Activated B cell treated with CpG ODN at 0.5 μM for 24 hours (primary cell): ENCODE measurements at regions of chr1 and their contacts with region 1.

Region 1: DNA sequence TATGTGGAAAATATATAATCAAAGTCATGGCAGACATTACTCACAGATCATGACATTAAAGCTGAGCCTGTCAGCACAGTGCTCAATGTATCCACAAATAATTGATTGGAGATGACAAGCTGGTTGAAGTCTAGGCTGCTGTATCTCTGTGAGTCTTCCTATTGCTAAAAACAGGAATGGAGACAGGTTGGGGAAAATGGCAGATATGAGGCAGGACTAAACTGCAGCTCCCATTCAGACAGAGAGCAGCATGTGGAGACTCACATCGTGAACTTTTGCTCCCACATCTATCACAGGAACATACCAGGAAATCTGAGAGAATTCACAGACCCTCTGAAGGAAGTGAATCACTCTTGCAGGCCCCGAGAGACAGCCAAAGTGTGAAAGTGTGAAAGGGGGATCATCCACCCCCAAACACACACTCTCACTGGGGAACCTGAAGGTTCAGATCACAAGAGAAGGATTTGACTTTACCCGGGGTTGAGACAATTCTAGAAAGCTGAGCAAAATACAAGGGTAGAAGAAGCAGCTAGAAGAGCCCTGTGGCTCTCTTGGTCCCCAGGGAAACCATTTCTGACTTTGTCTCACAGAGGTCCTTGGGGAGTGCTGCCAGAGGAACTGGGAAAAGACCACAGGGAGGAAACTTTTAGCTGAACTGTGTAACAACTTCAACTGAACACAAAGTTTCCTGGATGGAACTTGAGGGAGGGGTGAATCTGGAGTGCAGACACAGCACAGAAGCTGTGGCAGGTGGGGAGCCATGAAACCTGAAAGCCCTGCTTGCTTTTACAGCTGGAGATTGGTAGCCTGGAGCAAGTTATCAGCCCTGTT is 173.4 kb downstream of the S1PR1 start:
- DNase-seq: no peak
- ATAC-seq: peak; percentile 33
- H3K4me3 Mint-ChIP-seq: peak overlapping the region; percentile 64
- H3K27ac Mint-ChIP-seq: peak overlapping the region; percentile 74
- H3K4me1 Mint-ChIP-seq: peaks cover 75% of the 10 kb centered on the region
- H3K27me3 Mint-ChIP-seq: no peaks in the 10 kb centered on the region
- CTCF ChIP-seq: no peak

Region 2: GRCh38 chr1:100351095-100351891 is 1059.0 kb before region 1 on chr1:
- CTCF ChIA-PET with region 1: no interaction called
- POLR2A ChIA-PET with region 1: no interaction called
- intact Hi-C with region 1: loop called (anchors 5 kb)
- DNase-seq: peak; percentile 78
- ATAC-seq: peak; percentile 66
- H3K4me3 Mint-ChIP-seq: peak overlapping the region; percentile 99
- H3K27ac Mint-ChIP-seq: peak overlapping the region; percentile 96
- H3K4me1 Mint-ChIP-seq: peaks cover 35% of the 10 kb centered on the region
- H3K27me3 Mint-ChIP-seq: no peaks in the 10 kb centered on the region
- CTCF ChIP-seq: no peak

Region 3: GRCh38 chr1:101051688-101052638 is 358.3 kb before region 1 on chr1:
- CTCF ChIA-PET with region 1: no interaction called
- POLR2A ChIA-PET with region 1: no interaction called
- intact Hi-C with region 1: loop called (anchors 5 kb)
- DNase-seq: peak; percentile 27
- ATAC-seq: peak; percentile 88
- H3K4me3 Mint-ChIP-seq: peak overlapping the region; percentile 78
- H3K27ac Mint-ChIP-seq: peak overlapping the region; percentile 95
- H3K4me1 Mint-ChIP-seq: peaks cover 70% of the 10 kb centered on the region
- H3K27me3 Mint-ChIP-seq: no peaks in the 10 kb centered on the region
- CTCF ChIP-seq: no peak

Region 4: DNA sequence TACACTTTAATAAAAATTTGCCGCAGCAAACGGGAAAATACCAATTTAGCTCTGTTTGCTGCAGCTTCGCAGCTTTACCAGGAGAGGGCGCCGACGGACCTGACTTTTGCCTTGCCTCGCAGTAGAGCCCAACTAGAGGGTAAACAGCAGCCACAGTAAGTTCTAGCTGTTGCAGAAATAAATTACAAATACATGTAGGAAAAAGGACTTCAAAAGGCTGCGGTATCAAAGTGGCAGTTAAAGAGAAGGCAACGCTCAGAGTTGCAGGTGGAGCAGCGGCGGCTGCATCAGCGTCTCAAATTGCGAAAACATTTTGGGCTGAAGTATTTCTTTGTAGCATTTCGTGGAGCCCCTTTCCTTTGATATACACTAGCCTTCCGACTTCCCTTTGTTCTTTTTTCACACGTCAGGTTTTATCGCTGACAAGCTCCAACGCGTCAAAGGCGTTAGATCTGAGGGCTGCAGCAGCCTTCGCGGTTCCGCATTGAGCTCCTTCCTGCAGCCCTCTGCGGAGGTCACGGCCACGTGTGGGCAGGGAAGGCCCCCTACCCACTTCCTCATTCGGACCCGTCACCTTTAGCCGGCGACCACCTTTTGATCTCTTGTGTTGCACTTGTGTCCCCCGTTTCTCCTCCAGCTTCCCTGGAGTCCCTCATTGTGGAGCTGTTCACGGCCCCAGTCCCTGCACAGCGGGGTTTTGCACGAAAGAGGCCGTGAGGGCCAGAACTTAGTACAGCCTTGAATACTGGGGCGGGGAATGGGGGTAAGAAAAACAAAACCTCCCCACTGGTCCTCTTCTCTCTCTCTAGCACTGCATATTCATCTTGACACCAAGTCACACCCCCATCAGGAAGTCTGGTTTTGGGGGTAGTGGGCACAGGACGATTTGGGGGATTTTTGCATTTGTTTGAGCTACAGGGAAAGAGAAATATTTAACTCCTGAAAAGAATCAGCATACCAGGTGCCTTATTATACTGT is 100.6 kb before region 1 on chr1:
- CTCF ChIA-PET with region 1: interaction called, 21 read pairs
- POLR2A ChIA-PET with region 1: interaction called, 16 read pairs
- intact Hi-C with region 1: loop called (anchors 1 kb)
- DNase-seq: peak; percentile 57
- ATAC-seq: peak; percentile 75
- H3K4me3 Mint-ChIP-seq: peak overlapping the region; percentile 82
- H3K27ac Mint-ChIP-seq: peak overlapping the region; percentile 94
- H3K4me1 Mint-ChIP-seq: peaks cover 78% of the 10 kb centered on the region
- H3K27me3 Mint-ChIP-seq: no peaks in the 10 kb centered on the region
- CTCF ChIP-seq: peak; percentile 77

Region 5: DNA sequence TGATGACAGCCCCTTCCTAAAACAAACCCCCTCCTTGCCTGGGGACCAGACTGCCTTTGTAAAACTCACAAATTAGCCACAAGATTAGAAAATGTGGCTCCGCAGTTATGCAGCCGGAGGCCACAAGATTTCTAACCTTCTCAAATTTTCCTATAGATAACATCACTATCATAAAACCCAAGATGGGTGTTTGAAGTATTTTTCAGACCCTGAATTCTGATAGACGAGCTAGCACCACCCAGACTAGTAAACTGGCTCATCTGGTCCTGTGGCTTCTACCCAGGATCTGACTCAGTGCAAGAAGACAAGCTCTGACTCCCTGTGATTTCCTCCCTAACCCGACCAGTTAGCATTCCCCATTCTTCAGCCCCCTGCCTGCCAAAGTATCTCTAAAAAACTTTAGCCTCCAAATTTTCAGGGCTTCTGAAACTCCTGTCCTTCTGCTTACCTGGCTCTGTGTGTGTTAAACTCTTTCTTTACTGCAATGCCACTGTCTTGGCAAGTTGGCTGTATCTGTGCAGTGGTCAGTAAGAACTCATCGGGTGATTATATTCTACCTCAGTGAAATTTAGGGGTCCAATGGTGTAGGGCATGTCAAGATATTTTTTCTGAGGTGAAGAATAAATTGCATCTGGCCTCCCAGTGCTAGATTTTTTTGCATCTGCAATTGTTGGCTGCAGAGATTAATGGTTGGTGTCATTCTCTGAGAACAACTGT is 71.4 kb before region 1 on chr1:
- CTCF ChIA-PET with region 1: no interaction called
- POLR2A ChIA-PET with region 1: no interaction called
- intact Hi-C with region 1: no loop called
- DNase-seq: no peak
- ATAC-seq: no peak
- H3K4me3 Mint-ChIP-seq: no peak overlapping the region
- H3K27ac Mint-ChIP-seq: no peak overlapping the region
- H3K4me1 Mint-ChIP-seq: no peaks in the 10 kb centered on the region
- H3K27me3 Mint-ChIP-seq: no peaks in the 10 kb centered on the region
- CTCF ChIP-seq: no peak

Region 6: GRCh38 chr1:101388904-101389546 is 21.2 kb before region 1 on chr1:
- CTCF ChIA-PET with region 1: no interaction called
- POLR2A ChIA-PET with region 1: interaction called, 7 read pairs
- intact Hi-C with region 1: loop called (anchors 1 kb)
- DNase-seq: no peak
- ATAC-seq: peak; percentile 86
- H3K4me3 Mint-ChIP-seq: peak overlapping the region; percentile 32
- H3K27ac Mint-ChIP-seq: peak overlapping the region; percentile 87
- H3K4me1 Mint-ChIP-seq: peaks cover 51% of the 10 kb centered on the region
- H3K27me3 Mint-ChIP-seq: no peaks in the 10 kb centered on the region
- CTCF ChIP-seq: no peak

Region 7: GRCh38 chr1:101438359-101438758 is 28.1 kb after region 1 on chr1:
- CTCF ChIA-PET with region 1: interaction called, 17 read pairs
- POLR2A ChIA-PET with region 1: interaction called, 16 read pairs
- intact Hi-C with region 1: loop called (anchors 1 kb)
- DNase-seq: no peak
- ATAC-seq: peak; percentile 29
- H3K4me3 Mint-ChIP-seq: no peak overlapping the region
- H3K27ac Mint-ChIP-seq: no peak overlapping the region
- H3K4me1 Mint-ChIP-seq: peaks cover 42% of the 10 kb centered on the region
- H3K27me3 Mint-ChIP-seq: no peaks in the 10 kb centered on the region
- CTCF ChIP-seq: no peak

Region 8: DNA sequence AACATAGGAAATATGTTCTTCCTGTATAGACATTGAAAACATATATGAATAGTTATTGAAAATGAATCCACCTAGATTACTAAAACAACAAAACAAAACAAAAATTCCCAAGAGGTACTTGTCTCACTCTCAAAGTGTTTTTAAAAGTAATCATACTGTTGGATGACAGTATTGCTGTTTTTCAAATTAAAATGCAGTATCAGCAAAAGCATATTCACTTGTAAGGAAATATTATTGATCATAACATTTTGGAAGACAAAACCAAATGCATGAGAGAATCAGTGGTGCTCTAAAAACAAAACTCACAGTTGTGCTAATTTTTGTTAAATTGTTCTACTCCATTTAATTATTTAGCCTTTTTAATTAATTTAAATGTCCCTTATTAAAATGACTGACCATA is 1567.0 kb after region 1 on chr1:
- CTCF ChIA-PET with region 1: no interaction called
- POLR2A ChIA-PET with region 1: no interaction called
- intact Hi-C with region 1: no loop called
- DNase-seq: no peak
- ATAC-seq: no peak
- H3K4me3 Mint-ChIP-seq: no peak overlapping the region
- H3K27ac Mint-ChIP-seq: no peak overlapping the region
- H3K4me1 Mint-ChIP-seq: no peaks in the 10 kb centered on the region
- H3K27me3 Mint-ChIP-seq: no peaks in the 10 kb centered on the region
- CTCF ChIP-seq: no peak